MCF 10A (cell line): ENCODE measurements at regions of chr3 and their contacts with region 1.

Region 1: DNA sequence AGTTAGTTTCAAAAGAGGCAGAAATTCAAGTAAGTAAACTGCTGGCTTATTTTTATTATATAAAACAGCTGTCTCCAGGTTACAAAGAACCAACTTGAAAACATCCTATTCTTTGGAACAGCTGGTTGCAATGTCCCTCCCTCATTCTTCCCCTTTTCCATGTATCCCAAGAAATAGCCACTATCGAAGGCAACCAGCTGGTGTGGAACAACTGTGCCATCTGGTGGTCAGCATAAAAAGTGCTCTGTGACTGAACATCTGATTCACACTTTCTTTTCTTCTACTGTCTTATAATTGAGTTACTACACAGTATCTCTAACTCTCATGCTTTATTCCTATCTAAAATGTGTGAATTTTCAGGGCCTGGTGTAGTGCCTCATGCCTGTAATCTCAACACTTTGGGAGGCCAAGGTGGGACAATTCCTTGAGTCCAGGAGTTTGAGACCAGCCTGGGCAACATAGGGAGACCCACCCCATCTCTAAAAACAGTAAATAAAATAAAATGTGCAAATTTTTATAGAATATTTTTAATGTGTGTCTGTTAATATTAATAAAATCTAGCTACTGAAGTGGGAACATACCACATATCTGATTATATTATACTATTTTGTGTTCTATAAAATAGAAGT is 9.6 kb downstream of the OSBPL11 start:
- DNase-seq: peak; percentile 72
- H3K4me3 Mint-ChIP-seq: no peak overlapping the region
- H3K27ac Mint-ChIP-seq: no peak overlapping the region
- H3K4me1 Mint-ChIP-seq: peaks cover 9% of the 10 kb centered on the region
- H3K27me3 Mint-ChIP-seq: no peaks in the 10 kb centered on the region
- CTCF ChIP-seq: peak; percentile 87

Region 2: GRCh38 chr3:124995460-124995994 is 590.2 kb before region 1 on chr3:
- CTCF ChIA-PET with region 1: interaction called, 41 read pairs
- POLR2A ChIA-PET with region 1: no interaction called
- intact Hi-C with region 1: loop called (anchors 1 kb)
- DNase-seq: peak; percentile 62
- H3K4me3 Mint-ChIP-seq: no peak overlapping the region
- H3K27ac Mint-ChIP-seq: no peak overlapping the region
- H3K4me1 Mint-ChIP-seq: no peaks in the 10 kb centered on the region
- H3K27me3 Mint-ChIP-seq: no peaks in the 10 kb centered on the region
- CTCF ChIP-seq: peak; percentile 82

Region 3: GRCh38 chr3:125150525-125151441 is 434.9 kb before region 1 on chr3:
- CTCF ChIA-PET with region 1: no interaction called
- POLR2A ChIA-PET with region 1: no interaction called
- intact Hi-C with region 1: loop called (anchors 10 kb)
- DNase-seq: peak; percentile 81
- H3K4me3 Mint-ChIP-seq: no peak overlapping the region
- H3K27ac Mint-ChIP-seq: no peak overlapping the region
- H3K4me1 Mint-ChIP-seq: no peaks in the 10 kb centered on the region
- H3K27me3 Mint-ChIP-seq: no peaks in the 10 kb centered on the region
- CTCF ChIP-seq: peak; percentile 55

Region 4: GRCh38 chr3:125437631-125438435 is 147.9 kb before region 1 on chr3:
- CTCF ChIA-PET with region 1: interaction called, 5 read pairs
- POLR2A ChIA-PET with region 1: no interaction called
- intact Hi-C with region 1: loop called (anchors 2 kb)
- DNase-seq: peak; percentile 59
- H3K4me3 Mint-ChIP-seq: no peak overlapping the region
- H3K27ac Mint-ChIP-seq: no peak overlapping the region
- H3K4me1 Mint-ChIP-seq: peaks cover 14% of the 10 kb centered on the region
- H3K27me3 Mint-ChIP-seq: no peaks in the 10 kb centered on the region
- CTCF ChIP-seq: peak; percentile 90

Region 5: GRCh38 chr3:125519678-125520589 is 65.8 kb before region 1 on chr3 and contains the start of gene SNX4:
- CTCF ChIA-PET with region 1: interaction called, 17 read pairs
- POLR2A ChIA-PET with region 1: interaction called, 3 read pairs
- intact Hi-C with region 1: no loop called
- DNase-seq: peak; percentile 93
- H3K4me3 Mint-ChIP-seq: peak within 1 kb of the TSS; percentile 96
- H3K27ac Mint-ChIP-seq: peak within 1 kb of the TSS; percentile 95
- H3K4me1 Mint-ChIP-seq: peaks cover 12% of the 10 kb centered on the region
- H3K27me3 Mint-ChIP-seq: no peaks in the 10 kb centered on the region
- CTCF ChIP-seq: no peak
- total RNA-seq, gene SNX4: 20.4 and 26.4 TPM in 2 replicates

Region 6: GRCh38 chr3:125573216-125573615 is 12.5 kb before region 1 on chr3:
- CTCF ChIA-PET with region 1: interaction called, 18 read pairs
- POLR2A ChIA-PET with region 1: interaction called, 5 read pairs
- intact Hi-C with region 1: no loop called
- DNase-seq: no peak
- H3K4me3 Mint-ChIP-seq: no peak overlapping the region
- H3K27ac Mint-ChIP-seq: no peak overlapping the region
- H3K4me1 Mint-ChIP-seq: no peaks in the 10 kb centered on the region
- H3K27me3 Mint-ChIP-seq: no peaks in the 10 kb centered on the region
- CTCF ChIP-seq: no peak